Tibial artery (tissue), 4 donors: ENCODE measurements at regions of chr16 and their contacts with region 1.

Region 1: GRCh38 chr16:71461686-71462648 is at the start of gene ZNF23:
- DNase-seq: peak; percentile 81 to 90
- H3K4me3 ChIP-seq: peak within 1 kb of the TSS; percentile 84 to 97
- H3K27ac ChIP-seq: peak within 1 kb of the TSS; percentile 86 to 93
- H3K4me1 ChIP-seq: peaks cover 0 to 23% (median 7%) of the 10 kb centered on the region in 4 donors
- H3K27me3 ChIP-seq: no peaks in the 10 kb centered on the region
- CTCF ChIP-seq: no peak

Region 2: GRCh38 chr16:70364399-70364798 is 1097.6 kb before region 1 on chr16:
- intact Hi-C with region 1: loop called (anchors 5 kb)
- DNase-seq: no peak
- H3K4me3 ChIP-seq: no peak overlapping the region
- H3K27ac ChIP-seq: no peak overlapping the region
- H3K4me1 ChIP-seq: no peaks in the 10 kb centered on the region
- H3K27me3 ChIP-seq: no peaks in the 10 kb centered on the region
- CTCF ChIP-seq: no peak

Region 3: DNA sequence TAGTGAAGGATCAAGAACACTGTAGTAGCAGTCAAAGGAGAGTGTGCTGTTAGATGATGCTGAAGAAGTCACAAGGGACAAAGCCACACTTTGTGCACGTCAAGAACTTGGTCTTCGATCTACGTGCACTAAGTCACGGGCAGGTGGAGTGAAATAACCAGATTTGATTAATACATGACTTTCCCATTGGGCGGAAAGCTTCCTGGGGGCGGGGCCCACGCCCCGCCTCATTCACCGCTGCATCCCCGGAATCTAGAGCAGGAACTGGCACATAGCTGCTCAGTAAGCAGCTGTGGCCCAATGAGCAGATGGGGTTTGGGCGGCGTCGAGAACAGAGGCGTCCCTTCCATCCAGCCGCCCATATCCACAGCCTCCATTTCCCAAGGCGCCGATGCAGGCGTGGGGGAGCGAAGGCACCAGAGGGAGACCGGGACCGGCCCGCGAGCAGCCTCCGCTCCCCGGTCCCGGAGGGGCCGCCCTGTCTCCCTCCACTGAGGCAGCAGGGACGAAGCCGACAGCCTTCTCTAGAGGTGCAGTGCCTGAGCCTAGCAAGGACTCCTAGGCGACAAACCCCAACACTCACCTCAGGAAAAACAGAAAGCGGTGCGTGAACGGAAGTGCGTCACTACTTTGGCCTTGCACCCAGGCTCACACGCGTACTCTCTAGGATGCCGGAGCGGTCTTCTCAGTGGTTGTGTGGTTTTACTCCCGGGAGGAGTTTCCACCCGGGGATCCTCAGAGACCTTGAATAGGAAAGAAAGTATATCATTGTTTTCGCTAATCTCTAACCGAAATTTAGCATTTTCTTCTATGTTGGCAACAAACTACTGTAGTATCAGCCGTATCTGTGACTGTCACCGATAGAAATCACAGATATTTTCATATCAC is 22.3 kb after region 1 on chr16:
- intact Hi-C with region 1: loop called (anchors 1 kb)
- DNase-seq: peak; percentile 86 to 92
- H3K4me3 ChIP-seq: peak overlapping the region; percentile 79 to 89
- H3K27ac ChIP-seq: peak overlapping the region; percentile 97 to 98
- H3K4me1 ChIP-seq: peaks cover 0 to 14% (median 4%) of the 10 kb centered on the region in 4 donors
- H3K27me3 ChIP-seq: no peaks in the 10 kb centered on the region
- CTCF ChIP-seq: no peak